ENCODE measurements at regions of chr15 and their contacts with region 1.

Region 1: GRCh38 chr15:66603301-66604179 is 37.7 kb upstream of the LCTL start:
- DNase-seq: peak; percentile 75
- ATAC-seq: peak; percentile 47
- H3K4me3 ChIP-seq: no peak overlapping the region
- H3K4me3 Mint-ChIP-seq: no peak overlapping the region
- H3K27ac ChIP-seq: no peak overlapping the region
- H3K27ac Mint-ChIP-seq: no peak overlapping the region
- H3K4me1 ChIP-seq: no peaks in the 10 kb centered on the region
- H3K4me1 Mint-ChIP-seq: no peaks in the 10 kb centered on the region
- H3K27me3 ChIP-seq: peaks cover 0 to 7% (median 0%) of the 10 kb centered on the region in 4 experiments
- H3K27me3 Mint-ChIP-seq: peaks cover 14% of the 10 kb centered on the region
- CTCF ChIP-seq: peak; percentile 82

Region 2: DNA sequence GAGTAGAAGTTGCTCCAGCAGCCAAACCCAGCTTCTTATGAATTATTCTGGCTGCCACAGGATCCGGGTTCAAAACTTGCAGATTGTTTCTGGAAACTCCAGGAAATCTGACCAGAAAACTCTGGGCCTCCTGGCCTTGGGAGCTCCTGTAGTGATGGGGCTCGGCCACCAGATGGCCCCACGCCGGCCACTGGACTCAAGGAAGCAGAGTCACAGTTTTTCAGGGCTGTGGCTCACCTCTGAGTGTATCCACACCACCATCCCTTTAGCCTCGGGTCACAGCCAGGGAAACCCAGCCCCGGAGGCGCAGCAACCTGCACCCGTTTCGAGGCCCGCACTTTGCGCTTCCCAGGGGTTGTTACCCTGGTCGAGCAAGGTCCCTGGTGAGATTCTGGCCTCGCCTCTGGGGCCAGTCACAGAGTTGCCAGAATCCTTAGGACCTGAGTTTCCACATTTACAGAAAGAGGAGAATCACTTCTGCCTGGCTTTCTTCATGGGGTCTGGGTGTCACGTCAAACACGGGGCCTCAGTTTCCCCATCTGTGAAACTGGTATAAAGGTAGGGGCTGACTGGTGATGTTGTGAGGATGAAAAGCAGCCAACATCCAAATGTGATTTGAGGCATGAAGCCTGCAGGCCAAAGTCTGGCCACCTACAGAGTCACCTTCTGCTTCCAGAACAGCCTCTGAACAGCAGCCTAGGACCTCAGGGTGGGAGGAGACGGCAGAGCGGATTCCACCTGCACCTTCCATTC is 15.8 kb after region 1 on chr15:
- CTCF ChIA-PET with region 1: interaction called, 13 read pairs
- POLR2A ChIA-PET with region 1: no interaction called
- intact Hi-C with region 1: no loop called
- DNase-seq: peak; percentile 56
- ATAC-seq: peak; percentile 51
- H3K4me3 ChIP-seq: no peak overlapping the region
- H3K4me3 Mint-ChIP-seq: no peak overlapping the region
- H3K27ac ChIP-seq: no peak overlapping the region
- H3K27ac Mint-ChIP-seq: no peak overlapping the region
- H3K4me1 ChIP-seq: peaks cover 25 to 28% of the 10 kb centered on the region in 2 donors
- H3K4me1 Mint-ChIP-seq: peaks cover 31% of the 10 kb centered on the region
- H3K27me3 ChIP-seq: peaks cover 0 to 31% (median 15%) of the 10 kb centered on the region in 4 experiments
- H3K27me3 Mint-ChIP-seq: peaks cover 33% of the 10 kb centered on the region
- CTCF ChIP-seq: peak; percentile 73

Region 3: DNA sequence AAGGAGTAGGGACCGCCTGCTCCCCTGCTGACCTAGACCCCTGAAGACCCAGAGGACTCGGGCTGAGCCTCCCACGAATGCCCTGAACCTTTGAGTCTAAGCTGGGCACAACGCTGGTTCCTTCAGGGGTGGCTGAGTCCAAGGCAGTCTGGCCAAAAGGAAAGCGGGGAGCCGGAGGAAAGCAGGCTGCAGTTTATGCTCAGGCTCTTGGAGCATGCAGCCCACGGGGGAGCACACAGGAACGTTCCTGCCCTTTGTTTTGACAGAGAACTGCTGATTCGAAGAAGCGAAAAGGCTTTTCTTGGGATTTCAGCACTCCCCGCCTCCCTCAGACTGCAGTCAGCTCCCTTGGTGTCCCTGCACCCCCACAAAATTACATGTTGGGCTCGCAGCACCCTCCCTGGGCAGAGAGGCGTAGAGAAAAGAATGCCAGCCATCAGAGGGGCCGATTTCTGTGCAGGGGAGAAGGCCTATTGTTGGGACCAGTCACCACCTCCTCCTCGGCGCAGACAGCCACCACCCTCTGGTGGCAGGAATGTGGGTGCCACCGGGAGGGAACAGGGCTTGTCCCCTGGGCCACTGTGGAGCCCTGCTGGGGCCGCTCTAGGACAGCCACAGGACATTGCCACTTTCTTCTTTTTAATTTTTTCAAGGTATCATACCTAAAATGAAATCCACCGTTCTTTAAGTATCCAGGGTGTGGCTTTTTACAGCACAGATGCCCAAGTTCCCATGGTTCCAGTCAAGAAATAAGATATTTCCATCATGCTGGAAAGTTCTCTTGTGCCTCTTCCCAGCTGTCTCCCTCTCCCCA is 170.7 kb after region 1 on chr15:
- CTCF ChIA-PET with region 1: interaction called, 17 read pairs
- POLR2A ChIA-PET with region 1: no interaction called
- intact Hi-C with region 1: no loop called
- DNase-seq: peak; percentile 63
- ATAC-seq: peak; percentile 67
- H3K4me3 ChIP-seq: no peak overlapping the region
- H3K4me3 Mint-ChIP-seq: no peak overlapping the region
- H3K27ac ChIP-seq: no peak overlapping the region
- H3K27ac Mint-ChIP-seq: no peak overlapping the region
- H3K4me1 ChIP-seq: no peaks in the 10 kb centered on the region
- H3K4me1 Mint-ChIP-seq: no peaks in the 10 kb centered on the region
- H3K27me3 ChIP-seq: no peaks in the 10 kb centered on the region
- H3K27me3 Mint-ChIP-seq: no peaks in the 10 kb centered on the region
- CTCF ChIP-seq: peak; percentile 70

Region 4: DNA sequence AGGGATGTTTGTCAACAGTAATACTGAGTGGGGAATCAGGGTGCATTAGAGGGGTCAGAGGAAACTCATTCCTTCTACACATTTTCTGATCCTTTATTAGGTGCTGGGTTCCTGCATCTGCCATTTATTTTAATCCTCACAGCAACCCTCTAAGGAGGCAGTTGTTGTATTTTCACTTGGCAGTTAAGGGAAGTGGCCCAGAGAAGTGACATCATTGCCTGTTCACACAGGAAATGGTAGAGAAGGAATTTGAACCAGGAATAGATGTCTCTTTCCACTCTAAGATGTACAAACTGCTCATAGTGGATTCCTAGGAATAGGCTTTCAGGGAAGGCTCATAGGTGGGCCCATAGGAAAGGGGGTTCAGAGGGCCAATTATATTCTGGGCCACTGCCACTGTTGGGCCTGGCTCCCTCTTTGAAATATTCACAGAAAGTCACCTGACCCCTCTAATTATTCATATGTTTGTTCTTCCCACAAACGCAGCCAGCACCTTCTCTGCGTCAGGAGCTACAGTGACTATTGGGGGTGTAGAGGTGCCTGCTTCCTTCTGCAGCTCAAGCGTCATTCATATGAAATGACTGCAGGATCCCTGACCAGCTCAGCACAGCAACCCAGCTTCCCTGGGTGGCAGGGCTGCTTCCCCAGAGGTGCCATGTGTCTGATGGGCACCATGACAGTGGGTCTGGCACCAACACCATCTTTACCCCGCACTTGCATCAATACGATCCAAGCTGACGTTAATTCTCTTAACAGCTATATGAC is 298.0 kb after region 1 on chr15:
- CTCF ChIA-PET with region 1: no interaction called
- POLR2A ChIA-PET with region 1: no interaction called
- intact Hi-C with region 1: loop called (anchors 2 kb)
- DNase-seq: no peak
- ATAC-seq: no peak
- H3K4me3 ChIP-seq: no peak overlapping the region
- H3K4me3 Mint-ChIP-seq: no peak overlapping the region
- H3K27ac ChIP-seq: no peak overlapping the region
- H3K27ac Mint-ChIP-seq: no peak overlapping the region
- H3K4me1 ChIP-seq: peaks cover 10 to 11% of the 10 kb centered on the region in 2 donors
- H3K4me1 Mint-ChIP-seq: peaks cover 13% of the 10 kb centered on the region
- H3K27me3 ChIP-seq: no peaks in the 10 kb centered on the region
- H3K27me3 Mint-ChIP-seq: peaks cover 6% of the 10 kb centered on the region
- CTCF ChIP-seq: no peak

Region 5: GRCh38 chr15:67303490-67304363 is 700.2 kb after region 1 on chr15:
- CTCF ChIA-PET with region 1: no interaction called
- POLR2A ChIA-PET with region 1: no interaction called
- intact Hi-C with region 1: loop called (anchors 10 kb)
- DNase-seq: peak; percentile 66
- ATAC-seq: no peak
- H3K4me3 ChIP-seq: no peak overlapping the region
- H3K4me3 Mint-ChIP-seq: no peak overlapping the region
- H3K27ac ChIP-seq: no peak overlapping the region
- H3K27ac Mint-ChIP-seq: no peak overlapping the region
- H3K4me1 ChIP-seq: no peaks in the 10 kb centered on the region
- H3K4me1 Mint-ChIP-seq: peaks cover 3% of the 10 kb centered on the region
- H3K27me3 ChIP-seq: no peaks in the 10 kb centered on the region
- H3K27me3 Mint-ChIP-seq: no peaks in the 10 kb centered on the region
- CTCF ChIP-seq: peak; percentile 69